ENCODE measurements at regions of chr16 and their contacts with region 1.

Region 1: GRCh38 chr16:75471723-75472633 is 7.5 kb upstream of the TMEM170A start:
- DNase-seq: peak; percentile 60 to 89 (median 73)
- H3K4me3 ChIP-seq: no peak overlapping the region
- H3K27ac ChIP-seq: no peak overlapping the region
- H3K4me1 ChIP-seq: no peaks in the 10 kb centered on the region
- H3K27me3 ChIP-seq: no peaks in the 10 kb centered on the region
- CTCF ChIP-seq: peak; percentile 29 to 91 (median 80)
- POLR2A ChIP-seq: no peak

Region 2: DNA sequence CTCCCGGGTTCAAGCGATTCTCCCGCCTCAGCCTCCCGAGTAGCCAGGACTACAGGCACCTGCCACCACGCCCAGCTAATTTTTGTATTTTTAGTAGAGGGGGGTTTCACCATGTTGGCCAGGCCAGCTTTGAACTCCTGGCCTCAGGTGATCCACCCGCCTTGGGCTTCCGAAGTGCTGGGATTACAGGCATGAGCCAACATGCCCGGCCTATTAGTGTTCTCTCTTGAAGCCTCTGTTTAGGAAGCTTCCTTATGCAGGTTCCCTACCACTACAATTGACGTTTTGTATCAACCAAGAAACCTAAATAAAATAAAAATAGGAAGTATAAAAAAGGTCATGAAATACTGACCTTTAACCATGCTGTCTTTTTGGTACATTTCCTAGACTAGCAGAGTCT is 47.9 kb after region 1 on chr16:
- intact Hi-C with region 1: loop called in 1 of 2 experiments (anchors 5 kb)
- DNase-seq: no peak
- H3K4me3 ChIP-seq: no peak overlapping the region
- H3K27ac ChIP-seq: no peak overlapping the region
- H3K4me1 ChIP-seq: peaks cover 0 to 4% of the 10 kb centered on the region in 2 donors
- H3K27me3 ChIP-seq: no peaks in the 10 kb centered on the region
- CTCF ChIP-seq: no peak
- POLR2A ChIP-seq: no peak

Region 3: GRCh38 chr16:75622761-75623605 is 151.0 kb after region 1 on chr16 and contains the start of gene ADAT1:
- intact Hi-C with region 1: loop called in 1 of 2 experiments (anchors 10 kb)
- DNase-seq: peak; percentile 96 to 99 (median 98)
- H3K4me3 ChIP-seq: peak within 1 kb of the TSS; percentile 2 to 71 (median 42)
- H3K27ac ChIP-seq: peak within 1 kb of the TSS; percentile 58 to 93 (median 72)
- H3K4me1 ChIP-seq: peaks cover 9 to 22% of the 10 kb centered on the region in 2 donors
- H3K27me3 ChIP-seq: no peaks in the 10 kb centered on the region
- CTCF ChIP-seq: peak in 1 of 6 experiments; percentile 7
- POLR2A ChIP-seq: peak; percentile 56 to 67
- total RNA-seq, gene ADAT1: 36.7 to 191 (median 50.1) TPM

Region 4: DNA sequence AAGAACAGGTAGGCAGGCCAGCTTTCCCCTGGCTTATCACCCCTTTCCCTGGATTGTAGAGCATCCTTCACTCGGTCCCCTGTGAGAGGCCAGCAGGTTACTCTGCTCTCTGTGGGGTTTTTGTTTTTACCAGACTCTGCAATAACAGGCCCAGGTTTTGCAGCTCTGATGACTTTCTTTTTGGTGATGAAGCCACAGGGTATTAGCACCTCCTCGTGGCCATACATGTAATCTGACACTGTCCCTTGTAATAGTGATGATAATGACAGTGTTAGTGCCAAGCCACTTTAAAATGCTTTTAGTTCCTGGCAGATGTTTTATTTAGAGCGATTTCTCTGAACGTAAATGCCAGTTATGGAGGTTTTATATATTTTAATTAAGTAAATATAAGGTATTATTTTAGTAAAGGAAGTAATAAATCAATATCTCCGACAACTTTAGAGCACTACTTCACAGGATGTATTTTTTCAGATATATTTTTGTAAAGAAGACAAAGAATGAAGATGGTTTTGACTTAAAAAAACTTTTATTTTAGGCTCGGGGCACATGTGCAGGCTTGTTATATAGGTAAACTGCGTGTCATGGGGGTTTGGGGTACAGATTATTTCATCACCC is 292.3 kb after region 1 on chr16:
- intact Hi-C with region 1: loop called (anchors 10 kb)
- DNase-seq: peak; percentile 40 to 81 (median 50)
- H3K4me3 ChIP-seq: no peak overlapping the region
- H3K27ac ChIP-seq: no peak overlapping the region
- H3K4me1 ChIP-seq: no peaks in the 10 kb centered on the region
- H3K27me3 ChIP-seq: no peaks in the 10 kb centered on the region
- CTCF ChIP-seq: peak; percentile 52 to 85 (median 80)
- POLR2A ChIP-seq: no peak